Activated CD8-positive, alpha-beta T cell treated with anti-CD3 and anti-CD28 coated beads, Interleukin-2, amount 10 ng/mL, durations not matched to agents 7 days and 5 days (primary cell): ENCODE measurements at regions of chr16 and their contacts with region 1.

Region 1: GRCh38 chr16:57609541-57610401 is 18.7 kb upstream of the ADGRG1 start:
- DNase-seq: peak; percentile 84
- ATAC-seq: peak; percentile 95
- H3K4me3 Mint-ChIP-seq: peak overlapping the region; percentile 66
- H3K27ac Mint-ChIP-seq: peak overlapping the region; percentile 96
- H3K4me1 Mint-ChIP-seq: peaks cover 76% of the 10 kb centered on the region
- H3K27me3 Mint-ChIP-seq: no peaks in the 10 kb centered on the region

Region 2: DNA sequence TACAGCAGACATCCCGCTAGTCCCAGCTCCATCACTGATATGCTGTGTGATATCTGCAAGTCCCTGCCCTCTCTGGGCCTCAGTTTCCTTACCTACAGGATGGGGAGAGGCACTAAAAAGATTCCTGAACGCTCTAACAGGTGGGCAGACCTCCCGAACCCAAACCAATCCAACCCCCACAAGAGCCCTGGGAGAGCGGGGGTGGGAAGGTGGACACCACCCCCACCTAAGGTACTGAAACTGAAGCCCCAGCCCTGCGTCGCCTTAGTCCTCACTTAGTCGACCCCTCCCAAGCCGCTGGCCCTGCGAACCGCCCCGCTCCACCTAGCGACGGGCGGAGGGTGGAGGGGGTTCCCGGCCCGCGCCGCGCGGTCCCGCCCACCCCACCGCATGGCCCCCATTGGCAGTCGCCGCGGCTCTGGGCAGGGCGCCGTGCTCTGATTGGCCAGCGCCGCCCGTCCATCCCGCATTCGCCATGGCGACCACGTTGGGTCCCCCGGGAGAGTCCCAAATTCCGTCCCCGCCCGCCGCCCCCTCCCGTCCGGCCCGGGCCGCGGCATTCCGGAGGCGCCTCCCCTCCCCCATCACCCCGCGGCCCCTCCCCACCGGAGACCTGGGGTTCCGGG is 74.0 kb before region 1 on chr16:
- CTCF ChIA-PET with region 1: no interaction called
- POLR2A ChIA-PET with region 1: no interaction called
- DNase-seq: peak; percentile 94
- ATAC-seq: peak; percentile 87
- H3K4me3 Mint-ChIP-seq: peak overlapping the region; percentile 85
- H3K27ac Mint-ChIP-seq: peak overlapping the region; percentile 87
- H3K4me1 Mint-ChIP-seq: peaks cover 82% of the 10 kb centered on the region
- H3K27me3 Mint-ChIP-seq: no peaks in the 10 kb centered on the region

Region 3: GRCh38 chr16:57591086-57591869 is 18.5 kb before region 1 on chr16:
- CTCF ChIA-PET with region 1: interaction called, 105 read pairs
- POLR2A ChIA-PET with region 1: interaction called, 34 read pairs
- DNase-seq: peak; percentile 85
- ATAC-seq: peak; percentile 71
- H3K4me3 Mint-ChIP-seq: peak overlapping the region; percentile 68
- H3K27ac Mint-ChIP-seq: peak overlapping the region; percentile 92
- H3K4me1 Mint-ChIP-seq: peaks cover 77% of the 10 kb centered on the region
- H3K27me3 Mint-ChIP-seq: no peaks in the 10 kb centered on the region

Region 4: DNA sequence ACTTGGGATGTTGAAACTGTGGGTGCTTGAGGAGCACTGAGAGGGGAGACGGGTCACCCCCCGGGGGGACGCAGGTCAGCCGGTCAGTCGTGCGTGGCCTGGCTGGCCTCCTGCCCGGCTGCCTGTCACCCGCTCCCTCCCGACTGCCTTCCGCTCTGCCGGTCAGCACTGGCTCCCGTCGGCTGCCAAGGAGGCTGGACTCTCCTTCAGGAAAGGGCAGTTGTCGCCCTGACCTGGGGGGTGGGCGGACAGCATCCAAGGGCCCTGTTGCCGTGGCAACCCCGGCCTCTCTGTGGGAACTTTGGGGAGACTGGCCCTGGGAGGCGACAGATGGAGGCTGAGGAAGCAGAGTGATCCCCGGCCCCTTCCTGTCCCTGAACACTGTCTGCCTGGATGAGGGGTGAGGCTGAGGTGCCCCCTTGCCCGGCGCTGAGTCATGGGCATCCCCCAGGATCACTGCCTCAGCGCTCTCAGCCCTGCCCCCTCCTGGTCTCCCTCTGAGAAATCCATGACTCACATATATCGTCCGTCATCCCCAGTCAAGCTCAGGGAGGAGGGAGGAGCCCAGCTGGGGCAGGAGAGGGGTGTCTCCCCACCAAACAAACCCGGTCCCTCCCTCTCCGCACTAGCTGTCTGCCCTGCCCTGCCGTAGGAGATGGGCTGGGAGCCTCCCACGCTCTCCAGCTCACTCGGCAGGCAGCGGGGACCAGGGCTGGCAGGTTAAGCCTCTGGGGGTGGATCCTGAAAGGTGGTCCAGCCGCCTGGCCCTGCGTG is 18.4 kb after region 1 on chr16 and contains the start of gene ADGRG1:
- CTCF ChIA-PET with region 1: interaction called, 11 read pairs
- POLR2A ChIA-PET with region 1: interaction called, 5 read pairs
- DNase-seq: peak; percentile 57
- ATAC-seq: peak; percentile 74
- H3K4me3 Mint-ChIP-seq: peak within 1 kb of the TSS; percentile 34
- H3K27ac Mint-ChIP-seq: peak within 1 kb of the TSS; percentile 54
- H3K4me1 Mint-ChIP-seq: peaks cover 24% of the 10 kb centered on the region
- H3K27me3 Mint-ChIP-seq: peaks cover 18% of the 10 kb centered on the region
- total RNA-seq, gene ADGRG1: 3.3 to 3.7 TPM

Region 5: DNA sequence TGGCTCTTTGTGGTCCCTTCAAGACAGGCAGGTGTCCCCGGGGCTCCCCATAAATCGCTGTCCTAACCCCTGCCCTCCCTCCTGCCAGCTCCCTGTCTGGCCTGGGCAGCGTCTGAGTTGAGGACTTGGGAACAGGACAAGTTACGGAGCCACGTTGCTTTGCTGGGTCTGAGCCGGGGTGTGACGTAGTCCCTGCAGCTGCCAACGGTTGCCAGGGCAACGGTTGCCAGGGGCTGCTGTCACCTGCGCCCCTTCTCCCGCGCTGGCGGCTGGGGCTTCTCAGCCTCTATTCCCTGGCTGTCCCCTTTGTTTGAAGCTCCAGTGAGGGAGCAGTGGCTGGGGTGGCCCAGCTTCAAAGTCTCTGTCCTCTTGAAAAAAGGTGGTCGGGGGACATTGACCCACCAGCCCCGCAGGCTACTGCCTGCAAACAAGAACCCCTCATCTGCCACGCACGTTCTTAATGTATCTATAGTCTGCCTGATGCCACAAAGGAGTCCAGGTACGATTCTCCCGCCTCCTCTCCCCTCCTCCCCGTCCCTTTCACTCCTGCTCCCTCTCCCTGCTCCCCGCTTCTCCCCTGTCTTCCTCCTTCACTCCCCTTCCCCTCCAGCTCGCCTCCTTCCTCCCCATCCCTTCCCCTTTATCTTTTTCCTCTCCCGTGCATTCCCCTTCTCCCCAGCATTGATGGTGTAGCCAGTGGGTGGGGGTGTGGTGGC is 29.6 kb after region 1 on chr16:
- CTCF ChIA-PET with region 1: interaction called, 11 read pairs
- POLR2A ChIA-PET with region 1: interaction called, 5 read pairs
- DNase-seq: peak; percentile 32
- ATAC-seq: peak; percentile 62
- H3K4me3 Mint-ChIP-seq: no peak overlapping the region
- H3K27ac Mint-ChIP-seq: no peak overlapping the region
- H3K4me1 Mint-ChIP-seq: peaks cover 6% of the 10 kb centered on the region
- H3K27me3 Mint-ChIP-seq: peaks cover 11% of the 10 kb centered on the region

Region 6: DNA sequence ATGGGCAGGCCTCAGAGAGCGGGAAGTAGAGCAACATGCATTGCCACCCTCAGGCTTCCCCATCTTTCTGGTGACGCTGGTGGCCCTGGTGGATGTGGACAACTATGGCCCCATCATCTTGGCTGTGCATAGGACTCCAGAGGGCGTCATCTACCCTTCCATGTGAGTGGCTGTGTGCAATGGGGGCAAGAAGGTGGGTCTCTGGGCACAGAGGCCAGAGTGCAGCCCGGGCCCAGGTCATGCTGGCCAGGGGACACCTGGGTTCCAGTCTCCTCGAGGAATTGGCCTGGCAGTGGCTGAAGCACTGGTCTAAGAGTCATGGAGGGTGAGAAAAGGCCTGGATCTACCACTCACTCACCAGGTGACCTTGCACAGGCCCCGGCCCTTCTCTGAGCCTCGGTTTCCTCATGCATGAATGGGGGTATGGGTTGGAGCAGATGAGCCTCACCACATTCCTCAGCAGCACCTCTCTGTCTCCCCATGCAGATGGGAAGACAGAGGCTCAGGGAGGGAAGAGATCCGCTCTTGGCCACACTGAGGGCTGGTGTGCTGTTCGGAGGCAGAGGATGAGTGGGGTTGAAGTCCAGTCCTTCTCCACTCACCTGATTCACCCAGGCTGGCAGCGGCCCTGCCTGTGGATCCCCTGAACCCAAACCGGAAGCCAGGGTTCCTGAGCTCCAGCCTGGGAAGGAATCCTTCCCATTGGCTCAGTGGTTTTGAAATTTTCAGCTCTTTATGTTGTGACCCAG is 51.1 kb after region 1 on chr16:
- CTCF ChIA-PET with region 1: no interaction called
- POLR2A ChIA-PET with region 1: no interaction called
- DNase-seq: no peak
- ATAC-seq: no peak
- H3K4me3 Mint-ChIP-seq: no peak overlapping the region
- H3K27ac Mint-ChIP-seq: no peak overlapping the region
- H3K4me1 Mint-ChIP-seq: peaks cover 14% of the 10 kb centered on the region
- H3K27me3 Mint-ChIP-seq: no peaks in the 10 kb centered on the region

Region 7: GRCh38 chr16:57683636-57684545 is 74.1 kb after region 1 on chr16:
- CTCF ChIA-PET with region 1: no interaction called
- POLR2A ChIA-PET with region 1: no interaction called
- DNase-seq: no peak
- ATAC-seq: no peak
- H3K4me3 Mint-ChIP-seq: no peak overlapping the region
- H3K27ac Mint-ChIP-seq: peak overlapping the region; percentile 17
- H3K4me1 Mint-ChIP-seq: peaks cover 26% of the 10 kb centered on the region
- H3K27me3 Mint-ChIP-seq: no peaks in the 10 kb centered on the region